ENCODE measurements at regions of chr2 and their contacts with region 1.

Region 1: GRCh38 chr2:168118733-168119514 is 128.5 kb downstream of the STK39 start:
- DNase-seq: peak; percentile 73
- ATAC-seq: peak; percentile 61
- H3K4me3 ChIP-seq: no peak overlapping the region
- H3K4me3 Mint-ChIP-seq: no peak overlapping the region
- H3K27ac ChIP-seq: no peak overlapping the region
- H3K27ac Mint-ChIP-seq: no peak overlapping the region
- H3K4me1 ChIP-seq: peaks cover 4 to 8% of the 10 kb centered on the region in 2 donors
- H3K4me1 Mint-ChIP-seq: no peaks in the 10 kb centered on the region
- H3K27me3 ChIP-seq: no peaks in the 10 kb centered on the region
- H3K27me3 Mint-ChIP-seq: no peaks in the 10 kb centered on the region
- CTCF ChIP-seq: peak; percentile 75

Region 2: GRCh38 chr2:167264380-167264779 is 854.5 kb before region 1 on chr2:
- CTCF ChIA-PET with region 1: interaction called, 11 read pairs
- POLR2A ChIA-PET with region 1: no interaction called
- intact Hi-C with region 1: loop called (anchors 5 kb)
- DNase-seq: no peak
- ATAC-seq: no peak
- H3K4me3 ChIP-seq: no peak overlapping the region
- H3K4me3 Mint-ChIP-seq: no peak overlapping the region
- H3K27ac ChIP-seq: no peak overlapping the region
- H3K27ac Mint-ChIP-seq: no peak overlapping the region
- H3K4me1 ChIP-seq: no peaks in the 10 kb centered on the region
- H3K4me1 Mint-ChIP-seq: no peaks in the 10 kb centered on the region
- H3K27me3 ChIP-seq: no peaks in the 10 kb centered on the region
- H3K27me3 Mint-ChIP-seq: no peaks in the 10 kb centered on the region
- CTCF ChIP-seq: no peak

Region 3: DNA sequence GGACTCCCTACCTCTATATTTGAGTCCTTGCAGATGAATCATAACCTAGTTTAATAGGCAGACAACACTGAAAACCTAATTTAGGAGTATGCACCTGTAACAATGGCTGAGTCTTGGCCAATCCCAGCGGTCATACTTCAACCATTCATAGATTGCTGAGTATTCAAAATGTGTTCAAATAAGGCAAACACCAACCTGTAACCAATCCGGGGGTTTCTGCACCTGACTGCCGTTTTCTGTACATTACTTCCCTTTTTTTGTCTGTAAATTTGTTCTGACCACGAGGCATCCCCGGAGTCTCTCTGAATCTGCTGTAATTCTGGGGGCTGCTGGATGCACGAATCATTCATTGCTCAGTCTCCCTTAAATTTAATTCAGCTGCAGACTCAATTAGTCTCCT is 210.1 kb before region 1 on chr2:
- CTCF ChIA-PET with region 1: interaction called, 10 read pairs
- POLR2A ChIA-PET with region 1: no interaction called
- intact Hi-C with region 1: no loop called
- DNase-seq: no peak
- ATAC-seq: no peak
- H3K4me3 ChIP-seq: no peak overlapping the region
- H3K4me3 Mint-ChIP-seq: no peak overlapping the region
- H3K27ac ChIP-seq: no peak overlapping the region
- H3K27ac Mint-ChIP-seq: no peak overlapping the region
- H3K4me1 ChIP-seq: peaks cover 0 to 5% of the 10 kb centered on the region in 2 donors
- H3K4me1 Mint-ChIP-seq: peaks cover 7% of the 10 kb centered on the region
- H3K27me3 ChIP-seq: no peaks in the 10 kb centered on the region
- H3K27me3 Mint-ChIP-seq: peaks cover 3% of the 10 kb centered on the region
- CTCF ChIP-seq: no peak

Region 4: GRCh38 chr2:167964650-167965413 is 154.1 kb before region 1 on chr2:
- CTCF ChIA-PET with region 1: interaction called, 145 read pairs
- POLR2A ChIA-PET with region 1: no interaction called
- intact Hi-C with region 1: loop called (anchors 1 kb)
- DNase-seq: peak; percentile 8
- ATAC-seq: no peak
- H3K4me3 ChIP-seq: no peak overlapping the region
- H3K4me3 Mint-ChIP-seq: no peak overlapping the region
- H3K27ac ChIP-seq: no peak overlapping the region
- H3K27ac Mint-ChIP-seq: no peak overlapping the region
- H3K4me1 ChIP-seq: no peaks in the 10 kb centered on the region
- H3K4me1 Mint-ChIP-seq: no peaks in the 10 kb centered on the region
- H3K27me3 ChIP-seq: no peaks in the 10 kb centered on the region
- H3K27me3 Mint-ChIP-seq: no peaks in the 10 kb centered on the region
- CTCF ChIP-seq: peak; percentile 40

Region 5: GRCh38 chr2:168075446-168075845 is 43.5 kb before region 1 on chr2:
- CTCF ChIA-PET with region 1: interaction called, 16 read pairs
- POLR2A ChIA-PET with region 1: no interaction called
- intact Hi-C with region 1: no loop called
- DNase-seq: no peak
- ATAC-seq: no peak
- H3K4me3 ChIP-seq: no peak overlapping the region
- H3K4me3 Mint-ChIP-seq: no peak overlapping the region
- H3K27ac ChIP-seq: no peak overlapping the region
- H3K27ac Mint-ChIP-seq: no peak overlapping the region
- H3K4me1 ChIP-seq: no peaks in the 10 kb centered on the region
- H3K4me1 Mint-ChIP-seq: no peaks in the 10 kb centered on the region
- H3K27me3 ChIP-seq: no peaks in the 10 kb centered on the region
- H3K27me3 Mint-ChIP-seq: no peaks in the 10 kb centered on the region
- CTCF ChIP-seq: no peak

Region 6: DNA sequence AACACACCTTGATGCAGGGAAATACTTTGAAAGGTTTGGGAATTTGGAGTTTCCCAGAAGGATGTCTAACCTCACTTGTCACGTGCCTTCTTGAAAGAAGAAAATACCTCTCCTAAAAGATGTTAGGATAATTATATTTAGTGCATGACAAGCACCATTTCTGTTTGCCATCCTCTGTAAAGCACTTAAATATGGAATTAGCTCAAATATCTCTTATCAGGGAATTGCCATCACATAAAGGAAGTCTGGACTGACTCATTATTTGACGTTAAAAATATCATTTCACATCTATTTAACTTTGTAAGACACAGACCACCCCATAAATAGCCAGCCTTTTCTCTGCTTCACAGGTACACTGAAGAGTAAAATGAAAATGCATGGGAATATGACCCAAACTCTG is 11.6 kb before region 1 on chr2:
- CTCF ChIA-PET with region 1: interaction called, 52 read pairs
- POLR2A ChIA-PET with region 1: no interaction called
- intact Hi-C with region 1: no loop called
- DNase-seq: no peak
- ATAC-seq: no peak
- H3K4me3 ChIP-seq: no peak overlapping the region
- H3K4me3 Mint-ChIP-seq: no peak overlapping the region
- H3K27ac ChIP-seq: no peak overlapping the region
- H3K27ac Mint-ChIP-seq: no peak overlapping the region
- H3K4me1 ChIP-seq: no peaks in the 10 kb centered on the region
- H3K4me1 Mint-ChIP-seq: no peaks in the 10 kb centered on the region
- H3K27me3 ChIP-seq: no peaks in the 10 kb centered on the region
- H3K27me3 Mint-ChIP-seq: no peaks in the 10 kb centered on the region
- CTCF ChIP-seq: no peak

Region 7: DNA sequence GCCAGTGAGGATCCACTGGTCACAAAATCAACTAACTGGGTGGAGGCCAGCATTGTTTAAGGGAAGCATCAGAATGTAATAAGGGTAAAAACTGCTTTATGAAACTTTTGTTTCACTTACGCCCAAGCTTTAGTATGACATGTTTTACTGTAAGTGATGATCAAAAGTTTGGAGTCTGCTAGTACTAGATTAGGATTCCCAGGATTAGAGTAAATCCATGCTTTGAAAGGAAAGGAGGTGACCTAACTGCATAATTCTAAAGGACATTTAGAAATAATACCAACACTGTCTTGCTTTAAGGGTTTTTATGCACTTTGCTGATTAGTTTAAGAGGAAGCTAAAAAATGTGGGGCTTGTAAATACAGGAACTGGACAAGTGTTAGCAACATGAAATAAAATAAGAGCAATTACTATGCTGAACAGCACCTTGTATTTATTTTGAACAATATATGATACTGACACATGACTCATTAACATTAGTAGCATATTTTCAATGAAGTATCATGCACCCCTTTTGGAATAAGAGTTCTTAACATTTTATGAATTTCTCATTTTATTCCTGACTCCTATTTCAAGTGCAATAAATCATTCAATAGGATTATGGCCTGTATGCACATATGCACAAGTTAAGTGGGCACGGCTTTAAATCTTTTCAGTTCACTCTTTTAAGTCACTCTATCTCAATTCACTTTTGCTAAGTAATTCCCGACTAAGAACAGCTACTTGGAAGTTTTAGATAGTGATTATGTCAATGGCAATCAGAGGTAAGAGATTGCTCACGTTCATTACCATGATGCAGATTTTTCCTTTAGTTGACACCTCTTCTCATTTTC is 66.0 kb after region 1 on chr2:
- CTCF ChIA-PET with region 1: no interaction called
- POLR2A ChIA-PET with region 1: no interaction called
- intact Hi-C with region 1: no loop called
- DNase-seq: no peak
- ATAC-seq: no peak
- H3K4me3 ChIP-seq: no peak overlapping the region
- H3K4me3 Mint-ChIP-seq: no peak overlapping the region
- H3K27ac ChIP-seq: no peak overlapping the region
- H3K27ac Mint-ChIP-seq: no peak overlapping the region
- H3K4me1 ChIP-seq: no peaks in the 10 kb centered on the region
- H3K4me1 Mint-ChIP-seq: no peaks in the 10 kb centered on the region
- H3K27me3 ChIP-seq: no peaks in the 10 kb centered on the region
- H3K27me3 Mint-ChIP-seq: no peaks in the 10 kb centered on the region
- CTCF ChIP-seq: no peak

Measured in B cell (primary cell).